Heart right ventricle (tissue), 16 donors: ENCODE measurements at regions of chr6 and their contacts with region 1.

Region 1: GRCh38 chr6:6362056-6362840 is 41.8 kb upstream of the F13A1 start:
- DNase-seq: no peak
- ATAC-seq: no peak
- H3K4me3 ChIP-seq: no peak overlapping the region
- H3K27ac ChIP-seq: no peak overlapping the region
- H3K4me1 ChIP-seq: no peaks in the 10 kb centered on the region
- H3K27me3 ChIP-seq: no peaks in the 10 kb centered on the region
- CTCF ChIP-seq: no peak

Region 2: GRCh38 chr6:6201200-6201599 is 161.0 kb before region 1 on chr6:
- intact Hi-C with region 1: loop called in 1 of 10 experiments (anchors 5 kb)
- DNase-seq: no peak
- ATAC-seq: peak in 1 of 8 donors; percentile 15
- H3K4me3 ChIP-seq: no peak overlapping the region
- H3K27ac ChIP-seq: no peak overlapping the region
- H3K4me1 ChIP-seq: no peaks in the 10 kb centered on the region
- H3K27me3 ChIP-seq: no peaks in the 10 kb centered on the region
- CTCF ChIP-seq: no peak

Region 3: GRCh38 chr6:6635869-6636268 is 273.6 kb after region 1 on chr6:
- intact Hi-C with region 1: no loop called
- DNase-seq: no peak
- ATAC-seq: no peak
- H3K4me3 ChIP-seq: no peak overlapping the region
- H3K27ac ChIP-seq: no peak overlapping the region
- H3K4me1 ChIP-seq: peaks cover 0 to 11% (median 0%) of the 10 kb centered on the region in 9 donors
- H3K27me3 ChIP-seq: no peaks in the 10 kb centered on the region
- CTCF ChIP-seq: no peak